Motor neuron (in vitro differentiated cells): ENCODE measurements at regions of chr6 and their contacts with region 1.

Region 1: DNA sequence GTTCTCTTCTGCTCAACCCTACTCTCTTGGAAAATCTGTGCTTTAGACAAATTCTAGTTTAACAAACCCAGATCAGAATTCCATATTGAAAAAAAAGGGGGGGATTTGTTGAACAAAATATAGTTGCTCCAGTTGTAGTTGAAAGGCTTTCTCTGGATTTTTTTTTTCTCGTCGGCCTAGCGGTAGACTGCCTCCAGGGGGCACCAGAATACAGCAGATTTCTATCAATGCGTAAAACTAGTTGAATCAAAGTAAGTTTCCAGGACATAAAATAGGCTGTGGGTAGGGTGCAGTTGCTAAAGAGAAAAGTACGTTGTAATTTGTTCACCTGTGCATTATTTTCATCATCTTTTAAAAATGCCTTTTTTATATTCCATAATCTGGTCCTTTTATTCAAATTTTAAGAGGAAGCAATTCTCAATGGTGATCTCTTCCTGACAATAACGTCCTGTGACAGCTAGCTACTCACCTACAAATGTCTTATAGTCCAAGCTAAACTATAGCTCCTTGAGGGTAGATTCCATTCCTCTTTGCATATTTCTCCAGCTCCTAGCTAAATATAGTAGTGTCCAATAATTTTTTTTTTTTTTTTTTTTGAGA is 105.4 kb downstream of the PERP start:
- ATAC-seq: peak in 4 of 8 experiments; percentile 18 to 36 (median 25)
- H3K4me3 ChIP-seq: no peak overlapping the region
- H3K27ac ChIP-seq: no peak overlapping the region
- H3K4me1 ChIP-seq: no peaks in the 10 kb centered on the region

Region 2: GRCh38 chr6:138109042-138109997 is 107.5 kb after region 1 on chr6:
- in situ Hi-C with region 1: loop called in 3 of 9 experiments (anchors 5 to 10 kb)
- ATAC-seq: peak in 1 of 8 experiments; percentile 9
- H3K4me3 ChIP-seq: no peak overlapping the region
- H3K27ac ChIP-seq: no peak overlapping the region
- H3K4me1 ChIP-seq: peaks cover 0 to 12% of the 10 kb centered on the region in 2 donors

Region 3: GRCh38 chr6:138287144-138287955 is 285.5 kb after region 1 on chr6:
- in situ Hi-C with region 1: loop called in 1 of 9 experiments (anchors 25 kb)
- ATAC-seq: peak in 4 of 8 experiments; percentile 37 to 75 (median 41)
- H3K4me3 ChIP-seq: no peak overlapping the region
- H3K27ac ChIP-seq: no peak overlapping the region
- H3K4me1 ChIP-seq: no peaks in the 10 kb centered on the region